ENCODE measurements at regions of chr19 and their contacts with region 1.

Region 1: GRCh38 chr19:45717166-45717982 is 13.3 kb downstream of the FBXO46 start:
- DNase-seq: peak; percentile 97 to 99 (median 99)
- H3K4me3 ChIP-seq: peak overlapping the region; percentile 82
- H3K4me3 Mint-ChIP-seq: peak overlapping the region; percentile 86 to 97 (median 95)
- H3K27ac ChIP-seq: peak overlapping the region; percentile 83
- H3K27ac Mint-ChIP-seq: peak overlapping the region; percentile 83 to 99 (median 97)
- H3K4me1 ChIP-seq: peaks cover 24% of the 10 kb centered on the region
- H3K4me1 Mint-ChIP-seq: peaks cover 39 to 56% (median 49%) of the 10 kb centered on the region in 3 donors
- H3K27me3 ChIP-seq: no peaks in the 10 kb centered on the region
- H3K27me3 Mint-ChIP-seq: no peaks in the 10 kb centered on the region

Region 2: DNA sequence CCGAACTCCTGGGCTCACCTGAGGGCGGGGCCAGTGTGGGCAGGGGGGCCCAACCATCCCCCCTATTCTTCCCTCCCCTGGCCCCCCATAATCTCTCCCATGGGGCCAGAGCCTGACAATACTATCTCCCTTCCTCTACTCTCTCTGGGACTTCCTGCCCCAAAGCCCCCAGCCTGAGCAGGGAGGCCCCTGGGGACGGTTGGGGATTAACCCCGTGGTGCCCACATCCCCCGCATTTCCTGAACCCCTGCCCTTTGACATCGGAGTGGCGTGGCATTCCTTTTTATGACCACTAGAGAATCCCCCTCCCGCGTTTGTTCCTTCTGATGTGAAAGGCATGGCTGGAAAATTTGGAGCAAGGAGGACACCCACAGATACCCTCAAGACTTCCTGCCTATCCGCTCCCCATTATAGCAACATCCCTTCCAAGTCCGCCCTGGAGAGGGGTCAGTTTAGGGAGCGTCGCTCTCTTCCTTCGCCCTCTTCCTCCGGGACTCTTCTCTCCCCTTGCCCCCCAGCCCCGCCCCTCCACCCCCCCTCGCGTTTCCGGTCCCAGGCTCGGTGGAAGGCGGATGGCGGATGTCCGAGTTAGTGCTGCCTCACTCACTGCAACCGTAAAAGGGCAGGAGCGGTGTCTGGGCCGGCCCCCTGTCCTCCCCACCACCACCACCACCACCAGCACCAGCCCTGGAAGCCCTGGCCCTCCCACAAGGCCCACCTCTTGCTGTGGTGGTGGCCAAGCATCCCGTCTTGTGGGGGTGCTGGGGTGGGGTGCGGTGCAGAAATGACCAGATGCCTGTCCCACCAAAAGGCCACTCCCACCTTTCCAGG is 208.3 kb before region 1 on chr19:
- CTCF ChIA-PET with region 1: no interaction called
- POLR2A ChIA-PET with region 1: no interaction called
- DNase-seq: peak in 2 of 5 donors; percentile 15 to 55
- H3K4me3 ChIP-seq: peak overlapping the region; percentile 98
- H3K4me3 Mint-ChIP-seq: peak overlapping the region; percentile 93 to 100 (median 97)
- H3K27ac ChIP-seq: peak overlapping the region; percentile 97
- H3K27ac Mint-ChIP-seq: peak overlapping the region; percentile 92 to 99 (median 96)
- H3K4me1 ChIP-seq: peaks cover 47% of the 10 kb centered on the region
- H3K4me1 Mint-ChIP-seq: peaks cover 51 to 66% (median 56%) of the 10 kb centered on the region in 3 donors
- H3K27me3 ChIP-seq: no peaks in the 10 kb centered on the region
- H3K27me3 Mint-ChIP-seq: peaks cover 0 to 2% of the 10 kb centered on the region in 2 donors

Region 3: DNA sequence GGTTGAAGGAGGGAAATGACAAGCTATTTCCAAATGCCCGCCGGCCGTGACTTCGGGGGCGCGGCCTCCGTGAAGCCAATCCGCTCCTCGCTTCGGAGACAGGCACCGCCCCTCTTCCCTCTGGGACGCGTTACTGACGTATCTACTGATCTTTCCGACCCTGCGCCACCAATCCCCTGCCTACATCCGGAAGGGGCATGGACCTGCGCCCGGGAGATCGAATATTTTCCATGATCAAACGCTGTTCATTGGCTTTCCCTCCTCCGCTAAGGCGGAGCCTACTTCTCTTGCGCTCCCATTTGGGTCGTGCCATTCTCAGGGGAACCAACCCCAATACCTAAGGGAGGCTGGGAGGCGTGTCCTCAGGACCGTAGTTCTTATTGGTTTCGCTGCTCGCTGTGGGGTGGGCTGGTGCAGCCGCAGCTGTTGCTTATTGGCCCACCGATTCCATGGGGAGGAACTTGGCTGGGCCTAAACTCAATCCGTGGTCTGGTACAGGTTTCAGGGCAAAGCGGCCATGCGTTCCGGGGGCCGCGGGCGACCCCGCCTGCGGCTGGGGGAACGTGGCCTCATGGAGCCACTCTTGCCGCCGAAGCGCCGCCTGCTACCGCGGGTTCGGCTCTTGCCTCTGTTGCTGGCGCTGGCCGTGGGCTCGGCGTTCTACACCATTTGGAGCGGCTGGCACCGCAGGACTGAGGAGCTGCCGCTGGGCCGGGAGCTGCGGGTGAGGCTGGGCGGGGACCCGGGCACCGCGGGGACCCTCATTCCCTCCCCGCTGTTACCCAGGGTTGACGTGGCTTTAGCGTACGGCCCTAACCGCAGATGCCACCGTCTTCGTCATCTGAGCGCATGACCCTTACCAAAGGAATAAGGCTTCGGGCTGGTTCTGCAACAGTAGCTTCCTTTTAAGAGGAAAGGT is 24.9 kb before region 1 on chr19 and contains the start of gene QPCTL:
- CTCF ChIA-PET with region 1: interaction called, 45 read pairs
- POLR2A ChIA-PET with region 1: interaction called, 16 read pairs
- DNase-seq: peak; percentile 94 to 98 (median 98)
- H3K4me3 ChIP-seq: peak within 1 kb of the TSS; percentile 72
- H3K4me3 Mint-ChIP-seq: peak within 1 kb of the TSS; percentile 91 to 98 (median 93)
- H3K27ac ChIP-seq: peak within 1 kb of the TSS; percentile 92
- H3K27ac Mint-ChIP-seq: peak within 1 kb of the TSS; percentile 92 to 100 (median 97)
- H3K4me1 ChIP-seq: peaks cover 7% of the 10 kb centered on the region
- H3K4me1 Mint-ChIP-seq: peaks cover 16 to 27% (median 19%) of the 10 kb centered on the region in 3 donors
- H3K27me3 ChIP-seq: no peaks in the 10 kb centered on the region
- H3K27me3 Mint-ChIP-seq: no peaks in the 10 kb centered on the region
- total RNA-seq, gene QPCTL: 11.3 to 11.5 TPM

Region 4: GRCh38 chr19:45730389-45731288 is 13.3 kb after region 1 on chr19 and contains the start of gene FBXO46:
- CTCF ChIA-PET with region 1: interaction called, 4 read pairs
- POLR2A ChIA-PET with region 1: interaction called, 19 read pairs
- DNase-seq: peak; percentile 85 to 94 (median 90)
- H3K4me3 ChIP-seq: peak within 1 kb of the TSS; percentile 88
- H3K4me3 Mint-ChIP-seq: peak within 1 kb of the TSS; percentile 82 to 99 (median 94)
- H3K27ac ChIP-seq: peak within 1 kb of the TSS; percentile 81
- H3K27ac Mint-ChIP-seq: peak within 1 kb of the TSS; percentile 16 to 99 (median 90)
- H3K4me1 ChIP-seq: peaks cover 27% of the 10 kb centered on the region
- H3K4me1 Mint-ChIP-seq: peaks cover 23 to 38% (median 37%) of the 10 kb centered on the region in 3 donors
- H3K27me3 ChIP-seq: no peaks in the 10 kb centered on the region
- H3K27me3 Mint-ChIP-seq: peaks cover 0 to 1% of the 10 kb centered on the region in 2 donors
- total RNA-seq, gene FBXO46: 25.2 to 30.4 TPM